ENCODE measurements at regions of chr15 and their contacts with region 1.

Region 1: GRCh38 chr15:48877630-48878595 is at the start of gene EID1:
- DNase-seq: peak; percentile 85 to 93 (median 89)
- ATAC-seq: peak; percentile 93 to 95
- H3K4me3 Mint-ChIP-seq: peak within 1 kb of the TSS; percentile 96 to 100 (median 98)
- H3K27ac Mint-ChIP-seq: peak within 1 kb of the TSS; percentile 95 to 99 (median 98)
- H3K4me1 Mint-ChIP-seq: peaks cover 10 to 32% (median 19%) of the 10 kb centered on the region in 4 donors
- H3K27me3 Mint-ChIP-seq: peaks cover 0 to 18% (median 15%) of the 10 kb centered on the region in 5 donors
- polyA plus RNA-seq, gene EID1: 117 to 172 (median 160) TPM

Region 2: DNA sequence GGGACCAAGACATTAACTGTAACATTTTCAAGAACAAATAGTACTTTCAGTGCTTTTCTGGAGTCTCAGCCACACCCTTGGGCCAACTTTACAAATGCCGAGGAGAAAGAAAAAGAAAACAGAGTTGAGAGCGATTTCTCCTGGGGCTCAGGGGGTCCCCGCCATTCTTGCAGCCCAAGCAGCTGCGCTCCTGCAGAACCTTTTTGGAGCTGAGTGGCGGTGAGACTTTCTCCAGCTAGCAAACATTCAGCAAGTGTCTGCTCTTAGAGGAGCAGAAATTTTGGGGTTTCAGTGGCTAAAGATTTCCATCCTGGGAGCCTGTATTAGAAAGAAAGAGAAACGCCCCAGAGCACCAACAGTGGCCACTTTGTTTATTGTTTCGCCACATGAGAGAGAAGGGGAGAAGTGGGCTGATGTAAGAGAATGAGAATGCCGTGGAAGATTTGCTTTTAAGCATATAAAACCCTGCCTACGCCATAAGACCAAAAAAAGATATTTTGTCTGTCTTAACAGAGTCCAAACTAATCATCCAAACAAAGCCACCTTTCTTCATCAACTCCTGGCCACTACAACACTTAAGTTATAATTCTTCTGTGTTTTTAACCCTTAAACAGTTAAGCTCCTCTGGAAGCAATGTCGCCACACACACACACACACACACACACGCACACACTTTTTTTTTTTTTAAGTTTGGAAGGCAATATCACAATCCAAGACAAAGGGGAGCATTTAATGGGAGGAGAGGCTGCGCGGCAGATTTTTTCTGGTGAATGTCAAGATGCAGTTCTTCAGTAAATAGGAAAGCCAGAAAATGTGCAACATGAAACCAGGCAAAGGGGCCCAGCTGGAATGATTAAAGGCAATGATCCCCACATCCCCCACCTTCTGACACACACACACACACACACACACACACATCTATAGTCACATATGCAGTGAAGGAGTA is 19.2 kb after region 1 on chr15:
- POLR2A ChIA-PET with region 1: no interaction called
- DNase-seq: no peak
- ATAC-seq: no peak
- H3K4me3 Mint-ChIP-seq: no peak overlapping the region
- H3K27ac Mint-ChIP-seq: no peak overlapping the region
- H3K4me1 Mint-ChIP-seq: peaks cover 0 to 7% (median 0%) of the 10 kb centered on the region in 4 donors
- H3K27me3 Mint-ChIP-seq: peaks cover 8 to 26% (median 19%) of the 10 kb centered on the region in 5 donors

Region 3: GRCh38 chr15:49046220-49047102 is 168.5 kb after region 1 on chr15 and contains the start of gene SECISBP2L:
- POLR2A ChIA-PET with region 1: interaction called, 15 read pairs
- DNase-seq: peak; percentile 78 to 95 (median 88)
- ATAC-seq: peak; percentile 91
- H3K4me3 Mint-ChIP-seq: peak within 1 kb of the TSS; percentile 89 to 97 (median 96)
- H3K27ac Mint-ChIP-seq: peak within 1 kb of the TSS; percentile 87 to 96 (median 95)
- H3K4me1 Mint-ChIP-seq: peaks cover 14 to 44% (median 32%) of the 10 kb centered on the region in 4 donors
- H3K27me3 Mint-ChIP-seq: no peaks in the 10 kb centered on the region
- polyA plus RNA-seq, gene SECISBP2L: 17.6 to 25.2 (median 22.7) TPM